ENCODE measurements at regions of chr1 and their contacts with region 1.

Region 1: DNA sequence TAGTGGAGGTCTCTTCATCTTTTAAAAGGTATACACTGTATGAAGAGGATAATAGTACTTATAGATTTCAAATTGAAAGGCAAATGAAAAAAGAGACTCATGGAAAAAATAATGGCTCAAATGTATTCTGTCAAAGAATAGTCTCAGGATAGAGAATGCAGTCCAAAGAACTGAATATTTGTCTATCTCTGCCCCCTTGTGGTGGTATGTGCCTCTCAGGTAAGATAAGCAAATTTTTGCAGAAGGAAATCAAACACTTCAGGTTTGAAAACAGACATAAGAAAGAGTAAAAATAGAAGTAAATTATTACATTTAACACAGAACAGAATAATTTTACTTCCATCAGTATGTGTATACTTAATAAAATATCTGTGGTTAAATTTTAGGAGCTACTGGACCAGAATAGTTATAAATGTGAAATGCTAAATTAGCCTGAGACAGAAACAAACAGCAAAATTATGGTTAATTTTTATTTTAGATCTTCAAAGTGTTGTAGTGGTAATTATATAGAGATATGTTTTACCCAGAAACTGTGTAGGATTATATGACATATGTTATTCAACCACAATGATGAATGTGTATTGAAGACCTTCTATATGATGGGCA is 164.4 kb upstream of the PALMD start:
- DNase-seq: no peak
- H3K4me3 ChIP-seq: no peak overlapping the region
- H3K27ac ChIP-seq: no peak overlapping the region
- H3K4me1 ChIP-seq: no peaks in the 10 kb centered on the region
- H3K27me3 ChIP-seq: no peaks in the 10 kb centered on the region
- CTCF ChIP-seq: peak; percentile 47 to 53

Region 2: GRCh38 chr1:99170516-99170915 is 311.0 kb before region 1 on chr1:
- intact Hi-C with region 1: loop called (anchors 10 kb)
- DNase-seq: no peak
- H3K4me3 ChIP-seq: no peak overlapping the region
- H3K27ac ChIP-seq: no peak overlapping the region
- H3K4me1 ChIP-seq: no peaks in the 10 kb centered on the region
- H3K27me3 ChIP-seq: no peaks in the 10 kb centered on the region
- CTCF ChIP-seq: no peak